ENCODE measurements at regions of chr10 and their contacts with region 1.

Region 1: DNA sequence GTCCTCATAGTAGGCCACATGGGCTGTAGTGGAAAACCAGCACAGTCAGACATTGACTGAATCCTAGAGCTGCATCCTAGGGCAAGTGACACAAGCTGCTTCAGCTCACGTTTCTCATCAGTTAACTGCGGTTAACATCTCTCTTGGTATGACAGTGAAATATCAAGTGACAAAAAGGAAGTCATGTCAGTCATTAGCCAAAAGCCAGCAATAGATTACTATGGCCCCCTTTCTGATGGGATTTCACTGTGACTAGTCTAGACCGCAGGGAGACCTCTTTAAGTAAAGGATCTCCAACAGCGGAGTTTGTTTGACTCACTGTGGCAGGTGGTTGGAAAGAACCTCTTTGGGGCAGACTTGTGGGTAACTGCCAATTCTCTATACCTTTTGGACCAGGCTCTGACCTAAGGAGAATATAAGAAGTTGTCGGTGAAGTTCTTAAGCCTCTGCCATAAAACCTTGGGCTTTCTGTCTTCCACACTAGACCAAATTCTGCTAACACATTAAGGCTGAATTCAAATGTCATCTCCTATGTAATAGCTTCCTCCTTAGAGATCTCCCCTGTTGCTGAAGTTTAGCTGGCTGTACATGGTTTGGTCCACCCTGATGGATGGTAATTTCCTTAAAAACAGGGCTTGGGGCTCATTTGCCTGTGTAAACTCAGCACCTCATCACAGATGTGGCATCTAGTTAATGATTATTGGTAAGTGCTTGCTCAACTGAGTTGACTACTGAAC is 115.3 kb downstream of the SGMS1 start:
- DNase-seq: peak; percentile 75
- H3K4me3 Mint-ChIP-seq: no peak overlapping the region
- H3K27ac Mint-ChIP-seq: no peak overlapping the region
- H3K4me1 Mint-ChIP-seq: peaks cover 66% of the 10 kb centered on the region
- H3K27me3 Mint-ChIP-seq: no peaks in the 10 kb centered on the region

Region 2: GRCh38 chr10:50325449-50326171 is 182.9 kb before region 1 on chr10:
- intact Hi-C with region 1: loop called (anchors 5 kb)
- DNase-seq: peak; percentile 74
- H3K4me3 Mint-ChIP-seq: peak overlapping the region; percentile 57
- H3K27ac Mint-ChIP-seq: peak overlapping the region; percentile 39
- H3K4me1 Mint-ChIP-seq: peaks cover 47% of the 10 kb centered on the region
- H3K27me3 Mint-ChIP-seq: no peaks in the 10 kb centered on the region

Region 3: DNA sequence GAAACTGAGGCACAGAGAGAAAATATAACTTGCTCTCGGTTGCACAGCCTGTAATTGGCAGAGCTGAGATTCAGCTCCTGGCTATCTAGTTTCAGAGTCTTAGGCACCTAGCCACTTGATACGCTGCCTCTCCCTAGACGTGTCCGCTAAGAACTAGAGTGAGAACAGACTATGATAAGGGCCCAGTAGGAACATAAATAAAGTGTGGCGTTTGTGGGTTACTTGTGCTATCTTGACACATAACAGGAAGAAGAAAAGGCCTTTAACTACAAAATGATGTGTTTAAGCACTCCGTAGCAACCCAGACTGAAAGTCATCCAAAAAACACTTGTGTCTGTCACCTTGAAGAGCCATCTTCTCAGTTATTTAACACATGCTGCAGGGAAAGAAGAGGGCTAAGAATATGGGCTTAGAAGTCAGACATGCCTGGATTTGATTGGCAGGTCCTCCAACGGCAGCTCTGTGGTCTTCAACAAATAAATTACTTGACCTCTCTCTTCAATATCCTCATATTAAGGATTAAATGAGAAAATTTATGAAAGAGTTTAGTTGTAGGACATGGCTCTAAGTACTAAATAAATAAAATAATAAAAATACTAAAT is 19.1 kb after region 1 on chr10:
- intact Hi-C with region 1: loop called (anchors 2 kb)
- DNase-seq: no peak
- H3K4me3 Mint-ChIP-seq: no peak overlapping the region
- H3K27ac Mint-ChIP-seq: no peak overlapping the region
- H3K4me1 Mint-ChIP-seq: peaks cover 10% of the 10 kb centered on the region
- H3K27me3 Mint-ChIP-seq: no peaks in the 10 kb centered on the region

Region 4: GRCh38 chr10:50636618-50637579 is 128.4 kb after region 1 on chr10:
- intact Hi-C with region 1: loop called (anchors 1 kb)
- DNase-seq: peak; percentile 83
- H3K4me3 Mint-ChIP-seq: peak overlapping the region; percentile 65
- H3K27ac Mint-ChIP-seq: peak overlapping the region; percentile 73
- H3K4me1 Mint-ChIP-seq: peaks cover 30% of the 10 kb centered on the region
- H3K27me3 Mint-ChIP-seq: peaks cover 60% of the 10 kb centered on the region